Activated CD4-positive, alpha-beta memory T cell treated with anti-CD3 and anti-CD28 coated beads for 36 hours (primary cell): ENCODE measurements at regions of chr17 and their contacts with region 1.

Region 1: DNA sequence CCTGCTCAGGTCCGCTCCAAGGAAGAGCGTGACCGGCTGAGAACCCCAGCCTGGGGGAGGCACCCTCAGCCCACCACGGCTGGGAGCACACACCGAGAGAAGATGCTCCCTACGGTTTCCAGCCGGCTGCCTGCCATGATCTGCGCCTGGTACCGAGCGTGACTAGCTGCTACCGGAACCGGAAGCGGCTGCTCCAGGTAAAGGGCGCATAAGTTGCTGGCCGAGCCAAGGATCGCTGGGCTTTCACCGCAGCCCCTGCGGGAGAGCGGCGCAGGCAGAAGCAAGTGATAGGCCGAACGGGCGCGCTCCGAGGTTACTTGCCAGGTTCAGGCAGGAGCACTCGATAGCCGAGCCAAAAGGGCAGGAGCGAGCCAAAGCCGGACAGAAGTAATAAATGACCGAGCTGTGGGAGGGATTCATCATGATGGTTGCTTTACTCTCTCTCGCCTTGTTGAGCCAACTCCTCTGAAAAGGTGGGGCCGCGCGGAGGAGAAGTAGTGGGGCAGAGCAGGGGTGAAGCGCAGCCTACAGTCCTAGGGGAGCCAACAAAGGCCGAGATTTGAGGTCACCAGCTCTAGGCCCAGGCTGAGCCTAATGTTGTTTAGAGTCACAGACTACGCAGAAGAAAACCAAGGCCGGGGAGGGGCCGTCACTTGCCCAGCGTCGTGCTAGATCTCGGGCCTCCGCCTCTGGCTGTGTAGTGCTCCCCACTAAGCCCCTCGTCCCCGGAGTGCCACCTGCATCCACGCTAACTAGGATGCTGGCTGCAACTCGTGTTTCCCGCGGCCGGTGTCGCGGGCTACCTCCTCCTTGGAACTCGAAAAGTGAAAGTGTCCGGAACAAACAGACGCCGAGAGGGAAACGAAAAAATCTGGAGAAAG is at the start of gene MRPS23:
- DNase-seq: peak; percentile 99
- H3K4me3 Mint-ChIP-seq: peak within 1 kb of the TSS; percentile 98
- H3K27ac Mint-ChIP-seq: peak within 1 kb of the TSS; percentile 98
- H3K4me1 Mint-ChIP-seq: peaks cover 34% of the 10 kb centered on the region
- H3K27me3 Mint-ChIP-seq: no peaks in the 10 kb centered on the region
- total RNA-seq, gene MRPS23: 58.2 to 64.1 TPM

Region 2: GRCh38 chr17:57084802-57085447 is 765.2 kb before region 1 on chr17 and contains the start of gene AKAP1:
- CTCF ChIA-PET with region 1: no interaction called
- POLR2A ChIA-PET with region 1: interaction called, 4 read pairs
- intact Hi-C with region 1: loop called (anchors 5 kb)
- DNase-seq: peak; percentile 96
- H3K4me3 Mint-ChIP-seq: peak within 1 kb of the TSS; percentile 82
- H3K27ac Mint-ChIP-seq: peak within 1 kb of the TSS; percentile 84
- H3K4me1 Mint-ChIP-seq: peaks cover 38% of the 10 kb centered on the region
- H3K27me3 Mint-ChIP-seq: no peaks in the 10 kb centered on the region
- total RNA-seq, gene AKAP1: 24.5 to 30.8 TPM

Region 3: GRCh38 chr17:57649731-57650484 is 200.2 kb before region 1 on chr17:
- CTCF ChIA-PET with region 1: no interaction called
- POLR2A ChIA-PET with region 1: no interaction called
- intact Hi-C with region 1: no loop called
- DNase-seq: no peak
- H3K4me3 Mint-ChIP-seq: no peak overlapping the region
- H3K27ac Mint-ChIP-seq: no peak overlapping the region
- H3K4me1 Mint-ChIP-seq: peaks cover 9% of the 10 kb centered on the region
- H3K27me3 Mint-ChIP-seq: no peaks in the 10 kb centered on the region

Region 4: GRCh38 chr17:57774872-57775271 is 75.2 kb before region 1 on chr17:
- CTCF ChIA-PET with region 1: no interaction called
- POLR2A ChIA-PET with region 1: no interaction called
- intact Hi-C with region 1: no loop called
- DNase-seq: no peak
- H3K4me3 Mint-ChIP-seq: no peak overlapping the region
- H3K27ac Mint-ChIP-seq: no peak overlapping the region
- H3K4me1 Mint-ChIP-seq: no peaks in the 10 kb centered on the region
- H3K27me3 Mint-ChIP-seq: peaks cover 34% of the 10 kb centered on the region

Region 5: DNA sequence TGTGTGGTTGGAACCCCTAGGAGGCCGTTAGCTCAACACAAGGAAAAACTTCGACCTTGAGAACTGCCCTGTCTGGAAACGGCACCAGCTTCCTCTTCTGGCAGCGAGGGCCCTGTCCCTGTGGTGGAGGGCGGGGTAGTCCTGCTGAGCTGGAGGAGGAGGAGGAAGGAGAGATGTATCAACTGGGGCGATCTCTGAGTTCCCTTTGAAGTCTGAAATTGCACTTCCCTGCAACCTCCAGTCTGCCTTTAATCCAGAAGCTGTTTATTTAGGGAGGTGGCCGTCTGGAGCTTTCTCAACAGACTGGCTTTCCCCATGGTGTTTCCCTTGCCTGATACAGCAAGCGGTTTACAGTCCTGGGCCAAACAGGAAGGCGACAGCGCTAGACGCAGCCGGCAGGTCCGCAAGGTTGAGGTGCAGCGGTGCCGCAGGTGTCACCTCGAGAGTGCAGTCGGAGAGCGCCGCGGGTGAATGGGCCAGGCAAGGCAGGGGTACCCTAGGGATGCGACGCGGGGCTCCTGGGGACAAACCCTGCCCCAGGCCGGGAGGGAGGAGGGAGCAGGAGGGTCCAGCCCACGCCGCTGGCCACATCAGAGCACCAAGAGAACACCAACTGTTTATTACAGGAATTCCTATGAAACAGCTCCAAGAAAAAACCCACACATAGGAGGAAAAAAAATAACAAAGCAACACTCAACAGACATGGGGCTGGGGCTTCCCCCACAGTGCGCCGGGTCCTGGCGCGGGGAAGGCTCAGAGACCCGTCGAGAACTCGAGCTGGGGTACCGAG is 11.1 kb after region 1 on chr17:
- CTCF ChIA-PET with region 1: interaction called, 29 read pairs
- POLR2A ChIA-PET with region 1: interaction called, 7 read pairs
- intact Hi-C with region 1: no loop called
- DNase-seq: peak; percentile 46
- H3K4me3 Mint-ChIP-seq: peak overlapping the region; percentile 71
- H3K27ac Mint-ChIP-seq: no peak overlapping the region
- H3K4me1 Mint-ChIP-seq: peaks cover 13% of the 10 kb centered on the region
- H3K27me3 Mint-ChIP-seq: peaks cover 10% of the 10 kb centered on the region

Region 6: GRCh38 chr17:57987580-57988421 is 137.7 kb after region 1 on chr17 and contains the start of gene VEZF1:
- CTCF ChIA-PET with region 1: interaction called, 3 read pairs
- POLR2A ChIA-PET with region 1: interaction called, 6 read pairs
- intact Hi-C with region 1: loop called (anchors 1 kb)
- DNase-seq: peak; percentile 82
- H3K4me3 Mint-ChIP-seq: peak within 1 kb of the TSS; percentile 89
- H3K27ac Mint-ChIP-seq: peak within 1 kb of the TSS; percentile 87
- H3K4me1 Mint-ChIP-seq: peaks cover 56% of the 10 kb centered on the region
- H3K27me3 Mint-ChIP-seq: no peaks in the 10 kb centered on the region
- total RNA-seq, gene VEZF1: 26.8 to 29.8 TPM

Region 7: DNA sequence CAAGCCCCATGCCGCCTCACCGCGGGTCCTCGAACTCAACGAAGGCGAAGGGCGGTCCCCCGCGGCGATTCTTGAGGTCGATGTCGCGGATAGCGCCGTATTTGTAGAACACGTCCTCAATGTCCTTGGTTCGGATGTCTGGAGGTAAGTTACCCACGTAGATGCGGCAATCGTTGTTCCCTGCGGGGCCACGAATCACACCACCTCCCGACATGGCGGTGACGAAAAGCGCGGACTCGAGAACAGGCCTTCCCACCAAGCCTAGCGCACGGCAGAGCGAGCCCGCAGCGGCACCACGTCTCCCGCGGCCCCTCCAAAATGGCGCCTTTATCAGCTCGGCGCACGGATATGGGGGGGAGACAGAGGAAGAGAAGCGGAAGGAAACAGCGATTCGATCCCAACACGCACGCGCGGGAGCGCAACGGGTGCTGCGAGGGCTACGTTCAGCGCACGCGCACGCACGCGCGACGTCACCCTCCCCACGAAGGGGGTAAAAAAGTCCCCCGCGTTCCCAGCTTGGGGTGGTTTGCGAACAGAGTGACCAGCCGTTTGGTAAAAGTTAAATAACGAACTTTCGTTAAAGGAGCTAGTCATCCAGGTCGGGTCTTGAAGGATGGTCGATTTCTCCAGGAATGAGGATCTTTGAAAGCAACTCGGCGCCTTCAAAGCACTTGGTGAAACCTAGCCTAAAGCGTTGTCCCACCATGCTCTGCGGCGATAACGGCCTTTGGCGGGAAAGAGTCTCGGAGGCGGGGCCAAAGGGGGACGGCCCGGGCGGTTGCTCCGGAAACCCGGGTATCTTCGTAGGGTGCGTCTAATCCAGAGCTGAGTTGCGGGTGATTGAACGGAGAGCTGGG is 157.0 kb after region 1 on chr17 and contains the start of gene SRSF1:
- CTCF ChIA-PET with region 1: interaction called, 170 read pairs
- POLR2A ChIA-PET with region 1: interaction called, 20 read pairs
- intact Hi-C with region 1: loop called (anchors 1 kb)
- DNase-seq: peak; percentile 99
- H3K4me3 Mint-ChIP-seq: peak within 1 kb of the TSS; percentile 99
- H3K27ac Mint-ChIP-seq: peak within 1 kb of the TSS; percentile 100
- H3K4me1 Mint-ChIP-seq: peaks cover 46% of the 10 kb centered on the region
- H3K27me3 Mint-ChIP-seq: no peaks in the 10 kb centered on the region
- total RNA-seq, gene SRSF1: 325 to 326 TPM

Region 8: GRCh38 chr17:58112970-58113631 is 263.0 kb after region 1 on chr17:
- CTCF ChIA-PET with region 1: interaction called, 11 read pairs
- POLR2A ChIA-PET with region 1: no interaction called
- intact Hi-C with region 1: no loop called
- DNase-seq: peak; percentile 89
- H3K4me3 Mint-ChIP-seq: no peak overlapping the region
- H3K27ac Mint-ChIP-seq: no peak overlapping the region
- H3K4me1 Mint-ChIP-seq: peaks cover 4% of the 10 kb centered on the region
- H3K27me3 Mint-ChIP-seq: peaks cover 2% of the 10 kb centered on the region

Region 9: GRCh38 chr17:58352014-58352842 is 502.1 kb after region 1 on chr17 and contains the start of gene SUPT4H1:
- CTCF ChIA-PET with region 1: no interaction called
- POLR2A ChIA-PET with region 1: no interaction called
- intact Hi-C with region 1: loop called (anchors 2 kb)
- DNase-seq: peak; percentile 96
- H3K4me3 Mint-ChIP-seq: peak within 1 kb of the TSS; percentile 100
- H3K27ac Mint-ChIP-seq: peak within 1 kb of the TSS; percentile 99
- H3K4me1 Mint-ChIP-seq: peaks cover 50% of the 10 kb centered on the region
- H3K27me3 Mint-ChIP-seq: no peaks in the 10 kb centered on the region
- total RNA-seq, gene SUPT4H1: 113 to 114 TPM